GM10248 (cell line): ENCODE measurements at regions of chr13 and their contacts with region 1.

Region 1: GRCh38 chr13:75694722-75695121 is 58.6 kb downstream of the LMO7 start:
- DNase-seq: no peak
- CTCF ChIP-seq: no peak

Region 2: DNA sequence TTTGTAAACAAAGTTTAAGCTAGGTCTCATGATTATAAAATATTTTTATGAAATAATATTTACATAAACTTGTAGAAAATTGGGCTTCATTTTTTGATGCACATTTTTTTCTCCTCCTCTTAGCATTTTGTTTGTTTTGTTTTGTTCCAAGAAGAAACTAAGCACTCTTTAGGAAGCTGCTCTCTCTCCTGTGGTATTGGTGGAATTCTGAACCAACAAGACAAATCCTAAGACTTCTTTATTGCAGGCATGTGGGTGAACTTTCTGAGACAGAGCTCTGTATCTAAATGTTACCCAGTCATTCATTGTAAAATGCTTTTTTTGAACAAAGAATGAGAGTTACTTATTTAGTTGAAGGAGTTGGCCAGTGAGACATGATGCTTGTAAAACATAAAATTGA is 19.3 kb before region 1 on chr13:
- CTCF ChIA-PET with region 1: interaction called, 128 read pairs
- POLR2A ChIA-PET with region 1: no interaction called
- DNase-seq: no peak
- CTCF ChIP-seq: no peak

Region 3: GRCh38 chr13:75724752-75725504 is 30.2 kb after region 1 on chr13:
- CTCF ChIA-PET with region 1: interaction called, 24 read pairs
- POLR2A ChIA-PET with region 1: no interaction called
- DNase-seq: no peak
- CTCF ChIP-seq: no peak

Region 4: GRCh38 chr13:75792526-75793187 is 97.9 kb after region 1 on chr13:
- CTCF ChIA-PET with region 1: interaction called, 33 read pairs
- POLR2A ChIA-PET with region 1: no interaction called
- DNase-seq: no peak
- CTCF ChIP-seq: no peak

Region 5: DNA sequence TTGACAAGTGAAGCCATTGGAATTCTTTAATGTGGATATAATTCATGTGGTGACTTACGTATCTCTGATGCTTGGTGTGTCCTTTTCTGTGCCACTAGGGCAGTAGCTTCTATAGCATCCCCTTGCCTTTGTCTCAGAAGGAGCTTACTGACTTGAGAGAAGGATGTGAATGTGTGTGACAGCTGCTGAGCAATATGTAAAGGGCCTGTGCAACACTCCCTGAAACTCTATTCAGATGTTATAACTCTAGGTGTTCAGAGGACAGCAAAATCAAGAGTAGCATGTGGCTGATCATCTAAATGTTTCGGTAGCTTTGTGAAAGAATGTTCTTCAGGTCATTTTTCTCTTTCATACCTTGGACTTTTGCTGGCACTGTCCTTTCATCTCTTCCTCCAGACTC is 130.9 kb after region 1 on chr13:
- CTCF ChIA-PET with region 1: interaction called, 19 read pairs
- POLR2A ChIA-PET with region 1: no interaction called
- DNase-seq: no peak
- CTCF ChIP-seq: no peak

Region 6: GRCh38 chr13:75870397-75870903 is 175.7 kb after region 1 on chr13:
- CTCF ChIA-PET with region 1: interaction called, 50 read pairs
- POLR2A ChIA-PET with region 1: no interaction called
- DNase-seq: peak; percentile 37
- CTCF ChIP-seq: peak; percentile 63

Region 7: GRCh38 chr13:75993823-75994222 is 299.1 kb after region 1 on chr13:
- CTCF ChIA-PET with region 1: no interaction called
- POLR2A ChIA-PET with region 1: no interaction called
- DNase-seq: no peak
- CTCF ChIP-seq: no peak